ENCODE measurements at regions of chr6 and their contacts with region 1.

Region 1: DNA sequence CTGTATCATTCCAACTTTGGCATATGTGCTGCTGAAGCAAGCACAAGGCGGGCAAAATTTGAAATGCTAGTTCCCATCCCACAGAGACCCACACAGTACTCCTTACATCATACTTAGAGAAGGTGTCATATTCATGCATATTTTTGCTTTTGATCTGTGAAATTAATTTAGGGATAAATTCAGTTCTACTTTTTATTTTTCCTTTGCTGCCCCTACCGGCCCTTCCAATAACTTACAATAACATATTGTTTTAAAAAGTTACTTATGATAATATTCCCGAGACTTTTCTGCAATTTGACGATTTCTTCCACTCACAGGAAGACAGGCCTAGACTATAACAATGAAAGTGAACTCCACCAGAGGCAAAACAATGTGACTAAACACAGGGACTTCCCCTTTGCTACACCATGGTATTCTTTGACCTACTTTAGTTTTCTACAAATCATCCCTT is 35.0 kb downstream of the SESN1 start:
- DNase-seq: no peak
- ATAC-seq: peak; percentile 62

Region 2: DNA sequence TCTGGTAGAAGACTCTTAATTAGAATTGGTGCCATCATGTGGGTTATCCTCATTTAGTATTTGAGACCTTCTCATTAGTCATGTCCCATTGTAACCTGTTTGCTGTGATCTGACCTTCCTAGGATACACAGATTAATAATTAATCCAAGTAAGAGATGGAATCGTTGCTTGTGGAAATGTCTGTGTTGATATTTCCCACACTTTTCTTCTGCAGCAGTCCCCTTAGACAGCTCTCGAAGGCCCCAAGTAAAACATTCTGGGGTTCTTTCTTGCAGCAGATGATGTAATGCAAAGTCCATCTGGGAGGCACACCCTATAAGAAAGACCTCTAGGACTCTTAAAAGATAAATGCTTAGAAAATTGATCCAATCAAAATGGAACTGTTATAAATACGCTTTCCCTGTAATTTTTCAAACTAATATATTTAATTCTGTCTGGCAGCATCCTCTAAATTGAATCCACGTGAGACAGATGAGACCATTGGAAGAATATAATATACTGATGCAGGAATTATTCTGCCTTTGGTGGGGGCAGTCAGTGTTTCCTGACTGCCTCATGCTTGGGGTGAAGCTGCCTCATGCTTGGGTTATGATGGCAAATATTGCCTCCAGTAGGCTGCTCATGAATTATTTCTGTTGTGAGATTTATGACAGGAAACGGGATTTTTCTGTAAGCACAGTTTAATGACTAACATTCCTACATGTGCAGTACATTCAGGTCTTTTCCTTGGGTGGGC is 265.9 kb before region 1 on chr6:
- intact Hi-C with region 1: no loop called
- DNase-seq: no peak
- ATAC-seq: no peak

Region 3: GRCh38 chr6:108820006-108820405 is 239.6 kb before region 1 on chr6:
- intact Hi-C with region 1: no loop called
- DNase-seq: no peak
- ATAC-seq: no peak

Region 4: DNA sequence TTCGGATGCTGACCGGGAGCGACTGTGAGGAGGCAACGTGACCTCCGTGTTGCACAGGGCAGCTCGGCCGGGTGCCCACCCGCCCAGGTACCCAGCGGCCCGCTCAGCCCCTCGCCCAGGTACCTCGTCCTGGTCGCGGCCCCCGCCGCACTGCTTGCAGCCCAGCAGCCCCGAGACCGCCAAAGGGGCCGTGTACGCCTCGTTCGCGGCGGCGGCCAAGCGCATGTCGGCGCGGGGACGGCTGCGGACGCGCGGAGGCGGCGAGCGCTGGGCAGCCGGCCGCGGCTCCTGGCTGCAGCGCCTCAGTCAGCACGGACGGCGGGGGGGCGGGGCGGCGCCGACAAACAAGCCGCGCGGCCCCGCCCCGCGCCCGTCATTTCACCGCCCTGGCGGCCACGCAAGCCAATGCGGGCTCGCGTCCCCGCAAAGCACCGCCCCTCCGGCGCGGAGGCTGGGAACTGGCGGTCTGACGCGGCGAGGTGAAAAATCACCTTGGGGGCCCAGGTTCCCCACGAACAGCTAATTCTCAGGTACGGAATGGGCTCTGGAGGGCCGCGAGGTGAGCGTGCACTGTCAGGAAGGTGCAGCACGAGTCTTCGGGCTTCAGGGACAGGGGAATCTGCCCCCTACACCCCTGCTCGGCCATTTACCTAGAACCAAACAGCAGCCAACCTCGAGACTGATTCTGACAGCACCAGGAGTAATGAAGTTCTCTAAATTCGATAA is 50.2 kb before region 1 on chr6:
- intact Hi-C with region 1: loop called (anchors 10 kb)
- DNase-seq: peak; percentile 99
- ATAC-seq: peak; percentile 97

Measured in left ventricle myocardium superior (tissue), 1 donor.